ENCODE measurements at regions of chr1 and their contacts with region 1.

Region 1: DNA sequence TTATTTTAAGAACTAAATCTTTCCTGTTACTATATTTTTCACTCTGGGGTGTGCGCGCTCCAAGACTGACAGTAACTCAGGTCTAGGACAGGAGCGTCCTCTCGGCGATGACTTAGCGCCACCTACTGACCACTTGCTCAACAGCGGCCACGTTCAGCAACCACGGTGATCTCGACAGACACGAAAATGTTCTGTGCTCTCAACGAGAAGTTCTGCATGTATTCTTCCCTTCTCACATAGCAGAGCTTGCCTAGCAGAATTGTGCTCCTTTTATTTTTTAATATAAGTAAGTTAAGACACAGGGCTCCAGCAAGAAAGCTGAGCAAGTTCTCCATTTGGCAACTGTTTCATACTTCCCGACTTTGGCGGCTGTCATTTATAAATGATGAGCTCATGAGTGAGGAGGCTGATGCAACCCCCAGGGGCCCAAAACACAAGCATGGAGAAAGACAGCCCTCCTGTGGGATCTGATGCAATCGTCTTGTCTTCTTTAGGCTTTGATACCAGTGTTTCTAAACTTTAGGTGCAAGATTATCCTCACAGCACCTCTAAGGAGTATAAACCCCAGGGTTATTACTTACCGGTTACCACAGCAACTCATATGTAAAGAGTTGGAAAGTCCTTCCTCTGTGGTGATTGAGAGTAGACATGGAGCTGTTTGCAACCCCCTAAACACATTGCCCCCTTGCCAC is 92.6 kb downstream of the HHIPL2 start:
- DNase-seq: peak; percentile 87
- H3K4me3 ChIP-seq: peak overlapping the region; percentile 14
- H3K27ac ChIP-seq: peak overlapping the region; percentile 40
- H3K27me3 ChIP-seq: no peaks in the 10 kb centered on the region
- CTCF ChIP-seq: peak; percentile 95

Region 2: GRCh38 chr1:221478050-221478949 is 977.0 kb before region 1 on chr1:
- CTCF ChIA-PET with region 1: interaction called, 58 read pairs
- POLR2A ChIA-PET with region 1: no interaction called
- DNase-seq: peak; percentile 66
- H3K4me3 ChIP-seq: no peak overlapping the region
- H3K27ac ChIP-seq: no peak overlapping the region
- H3K27me3 ChIP-seq: no peaks in the 10 kb centered on the region
- CTCF ChIP-seq: peak; percentile 95

Region 3: GRCh38 chr1:221725735-221726672 is 729.3 kb before region 1 on chr1:
- CTCF ChIA-PET with region 1: interaction called, 22 read pairs
- POLR2A ChIA-PET with region 1: no interaction called
- DNase-seq: no peak
- H3K4me3 ChIP-seq: no peak overlapping the region
- H3K27ac ChIP-seq: no peak overlapping the region
- H3K27me3 ChIP-seq: no peaks in the 10 kb centered on the region
- CTCF ChIP-seq: no peak

Region 4: GRCh38 chr1:221868593-221869303 is 586.6 kb before region 1 on chr1:
- CTCF ChIA-PET with region 1: interaction called, 12 read pairs
- POLR2A ChIA-PET with region 1: no interaction called
- DNase-seq: peak; percentile 44
- H3K4me3 ChIP-seq: no peak overlapping the region
- H3K27ac ChIP-seq: no peak overlapping the region
- H3K27me3 ChIP-seq: no peaks in the 10 kb centered on the region
- CTCF ChIP-seq: no peak

Region 5: GRCh38 chr1:222275729-222276465 is 179.4 kb before region 1 on chr1:
- CTCF ChIA-PET with region 1: interaction called, 12 read pairs
- POLR2A ChIA-PET with region 1: no interaction called
- DNase-seq: no peak
- H3K4me3 ChIP-seq: no peak overlapping the region
- H3K27ac ChIP-seq: no peak overlapping the region
- H3K27me3 ChIP-seq: no peaks in the 10 kb centered on the region
- CTCF ChIP-seq: no peak

Region 6: GRCh38 chr1:222465211-222466041 is 10.1 kb after region 1 on chr1:
- CTCF ChIA-PET with region 1: interaction called, 17 read pairs
- POLR2A ChIA-PET with region 1: no interaction called
- DNase-seq: peak; percentile 82
- H3K4me3 ChIP-seq: peak overlapping the region; percentile 50
- H3K27ac ChIP-seq: peak overlapping the region; percentile 96
- H3K27me3 ChIP-seq: no peaks in the 10 kb centered on the region
- CTCF ChIP-seq: peak; percentile 94

Measured in AG04450 (cell line).